HepG2 (cell line): ENCODE measurements at regions of chr6 and their contacts with region 1.

Region 1: GRCh38 chr6:57141451-57142177 is 30.5 kb upstream of the BAG2 start:
- DNase-seq: peak; percentile 83
- ATAC-seq: peak; percentile 97
- H3K4me3 ChIP-seq: no peak overlapping the region; a peak in 1 of 6 replicates
- H3K27ac ChIP-seq: peak overlapping the region; percentile 12
- H3K4me1 ChIP-seq: peaks cover 25% of the 10 kb centered on the region
- H3K27me3 ChIP-seq: no peaks in the 10 kb centered on the region
- CTCF ChIP-seq: no peak
- EP300 ChIP-seq: peak in 1 of 2 experiments; percentile 60; a peak in 1 of 4 replicates
- POLR2A ChIP-seq: no peak
- RAD21 ChIP-seq: no peak

Region 2: GRCh38 chr6:57089687-57090460 is 51.7 kb before region 1 on chr6 and contains the start of gene ZNF451:
- CTCF ChIA-PET with region 1: no interaction called
- POLR2A ChIA-PET with region 1: interaction called, 6 read pairs
- in situ Hi-C with region 1: no loop called
- intact Hi-C with region 1: loop called (anchors 2 kb)
- DNase-seq: peak; percentile 97
- ATAC-seq: peak; percentile 98
- H3K4me3 ChIP-seq: peak within 1 kb of the TSS; percentile 45 to 66 (median 62)
- H3K27ac ChIP-seq: peak within 1 kb of the TSS; percentile 65
- H3K4me1 ChIP-seq: peaks cover 67% of the 10 kb centered on the region
- H3K27me3 ChIP-seq: no peaks in the 10 kb centered on the region
- CTCF ChIP-seq: peak; percentile 41; the same call in 1 of the 2 replicates
- EP300 ChIP-seq: peak in 1 of 2 experiments; percentile 60; a peak in 2 of 4 replicates
- POLR2A ChIP-seq: peak; percentile 83 to 85
- RAD21 ChIP-seq: peak; percentile 62
- total RNA-seq, gene ZNF451: 65.7 and 104 TPM in 2 replicates